PC-9 (cell line): ENCODE measurements at regions of chr14 and their contacts with region 1.

Region 1: DNA sequence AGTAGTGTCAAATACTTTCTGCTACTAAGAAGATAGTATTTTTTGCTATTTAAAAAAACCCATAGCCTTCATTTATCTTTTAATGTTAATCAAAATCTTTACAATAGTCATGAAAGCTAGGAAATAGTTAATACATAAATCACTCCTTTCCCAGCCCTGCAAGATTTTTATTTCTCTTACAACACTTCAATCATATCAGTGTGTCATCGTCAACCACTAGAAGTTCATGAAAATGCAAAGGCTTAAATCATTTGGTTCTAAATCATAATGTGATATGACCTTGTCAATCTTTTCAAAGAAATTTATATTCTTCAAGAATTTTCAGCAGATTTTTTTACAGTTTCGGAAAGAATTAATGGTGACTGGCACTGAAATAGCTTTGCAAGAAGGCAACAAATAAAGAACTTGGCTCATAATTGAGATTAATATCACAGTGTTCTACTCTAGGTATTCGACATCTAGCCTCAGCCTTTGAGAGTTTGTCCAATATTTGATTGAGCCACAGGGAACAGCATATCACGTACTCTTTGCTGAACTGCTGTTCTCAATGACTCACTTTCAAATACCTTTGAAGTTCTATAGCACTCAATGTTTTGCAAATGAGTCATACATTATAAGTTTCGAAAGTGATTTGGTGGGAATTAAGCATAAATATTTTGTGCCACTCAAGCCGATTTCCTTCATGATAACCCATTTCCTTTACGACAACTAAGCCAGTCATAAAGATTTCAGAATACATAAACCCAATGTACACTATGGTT is 383.9 kb upstream of the FOXG1 start:
- DNase-seq: peak; percentile 14 to 92
- H3K4me3 ChIP-seq: no peak overlapping the region
- H3K27ac ChIP-seq: peak overlapping the region; percentile 82
- H3K4me1 ChIP-seq: peaks cover 13% of the 10 kb centered on the region
- H3K27me3 ChIP-seq: no peaks in the 10 kb centered on the region
- CTCF ChIP-seq: no peak

Region 2: DNA sequence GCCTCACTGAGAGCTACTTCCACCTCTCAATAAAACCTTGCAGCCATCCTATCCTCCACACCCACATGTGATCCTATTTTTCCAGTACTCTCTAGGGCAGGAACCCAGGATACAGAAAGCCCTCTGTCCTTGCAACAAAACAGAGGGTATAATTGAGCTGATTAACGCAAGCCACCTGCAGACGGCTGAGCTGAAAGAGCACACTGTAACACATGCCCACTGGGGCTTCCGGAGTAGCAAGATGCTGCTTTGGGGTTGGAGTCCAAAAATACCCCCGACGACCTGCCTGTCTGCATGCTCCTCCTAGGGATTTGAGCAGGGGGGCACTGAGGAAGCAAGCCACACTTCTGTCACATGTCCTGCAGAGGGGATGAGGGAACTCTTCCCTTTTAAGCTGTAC is 17.1 kb before region 1 on chr14:
- CTCF ChIA-PET with region 1: no interaction called
- POLR2A ChIA-PET with region 1: no interaction called
- intact Hi-C with region 1: no loop called
- DNase-seq: no peak
- H3K4me3 ChIP-seq: no peak overlapping the region
- H3K27ac ChIP-seq: no peak overlapping the region
- H3K4me1 ChIP-seq: no peaks in the 10 kb centered on the region
- H3K27me3 ChIP-seq: no peaks in the 10 kb centered on the region
- CTCF ChIP-seq: no peak

Region 3: GRCh38 chr14:28494196-28494595 is 111.6 kb after region 1 on chr14:
- CTCF ChIA-PET with region 1: no interaction called
- POLR2A ChIA-PET with region 1: no interaction called
- intact Hi-C with region 1: loop called (anchors 10 kb)
- DNase-seq: peak; percentile 2 to 56
- H3K4me3 ChIP-seq: no peak overlapping the region
- H3K27ac ChIP-seq: 0 out of 2 replicates have a peak overlapping the region, but pooled peaks have one; percentile 32
- H3K4me1 ChIP-seq: no peaks in the 10 kb centered on the region
- H3K27me3 ChIP-seq: no peaks in the 10 kb centered on the region
- CTCF ChIP-seq: no peak